ENCODE measurements at regions of chr2 and their contacts with region 1.

Region 1: DNA sequence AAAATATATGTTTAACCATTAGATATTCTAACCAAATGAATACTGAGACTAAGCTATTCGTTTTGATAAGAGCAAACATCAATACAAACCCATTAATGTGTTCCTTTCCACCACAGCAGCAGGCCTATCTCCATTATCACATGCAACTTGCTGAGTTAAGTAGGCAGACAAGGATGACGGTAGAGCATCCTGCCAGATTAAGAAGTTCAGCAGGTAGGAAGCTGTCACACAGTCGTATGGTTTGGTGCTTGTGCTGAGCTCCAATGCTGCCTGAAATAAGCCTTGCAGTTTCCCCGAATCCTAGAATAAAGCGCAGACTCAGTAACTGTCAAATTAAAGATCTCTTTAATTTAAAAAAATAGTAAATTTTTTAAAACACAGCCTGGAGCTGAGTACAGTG is 39.6 kb downstream of the THADA start:
- DNase-seq: no peak
- ATAC-seq: no peak
- H3K4me3 ChIP-seq: no peak overlapping the region
- H3K27ac ChIP-seq: no peak overlapping the region
- H3K4me1 ChIP-seq: no peaks in the 10 kb centered on the region
- CTCF ChIP-seq: no peak
- EP300 ChIP-seq: no peak
- POLR2A ChIP-seq: no peak
- RAD21 ChIP-seq: no peak

Region 2: DNA sequence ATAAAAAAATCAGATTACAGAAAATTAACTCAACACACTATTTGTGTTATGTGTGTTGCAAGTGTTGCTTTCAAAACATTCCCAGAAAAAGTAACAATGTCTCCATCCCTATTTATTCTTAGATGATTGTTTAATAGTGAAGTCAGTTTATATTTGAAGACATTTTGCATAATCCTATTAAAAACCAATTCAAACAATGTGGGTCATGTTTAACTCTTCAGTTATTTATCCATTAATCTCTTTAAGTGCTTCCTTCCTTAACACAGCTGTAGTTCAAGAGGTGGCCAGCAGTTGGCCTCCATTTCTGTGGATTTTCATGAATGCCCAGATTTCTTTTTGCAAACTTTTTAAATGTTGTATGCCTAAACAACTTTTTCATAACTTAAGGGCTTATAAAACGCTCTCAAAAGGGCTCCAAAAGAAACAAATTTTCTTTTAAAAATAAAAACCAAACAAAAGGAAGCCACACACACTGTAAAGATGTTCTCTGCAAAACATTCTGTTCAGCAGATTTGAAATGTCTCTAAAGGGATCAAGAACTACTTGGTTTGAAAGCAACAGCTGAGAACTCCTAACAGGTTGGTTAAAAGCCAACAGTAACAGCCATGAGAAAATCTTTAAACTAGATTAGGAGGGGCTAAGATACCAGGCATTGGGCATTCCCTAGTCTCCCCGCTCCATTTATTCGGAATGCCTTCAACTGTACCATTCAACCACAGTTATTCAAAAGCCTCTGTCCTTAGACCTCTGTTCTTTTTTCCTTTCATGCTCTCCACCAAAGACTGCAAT is 31.9 kb before region 1 on chr2:
- CTCF ChIA-PET with region 1: no interaction called
- POLR2A ChIA-PET with region 1: no interaction called
- DNase-seq: peak; percentile 11 to 23
- ATAC-seq: peak in 1 of 2 experiments; percentile 53; a peak in 1 of 6 replicates
- H3K4me3 ChIP-seq: no peak overlapping the region
- H3K27ac ChIP-seq: no peak overlapping the region
- H3K4me1 ChIP-seq: peaks cover 11% of the 10 kb centered on the region
- CTCF ChIP-seq: 0 out of 3 replicates have a peak, but pooled peaks have one; percentile 10
- EP300 ChIP-seq: no peak
- POLR2A ChIP-seq: no peak
- RAD21 ChIP-seq: no peak

Region 3: DNA sequence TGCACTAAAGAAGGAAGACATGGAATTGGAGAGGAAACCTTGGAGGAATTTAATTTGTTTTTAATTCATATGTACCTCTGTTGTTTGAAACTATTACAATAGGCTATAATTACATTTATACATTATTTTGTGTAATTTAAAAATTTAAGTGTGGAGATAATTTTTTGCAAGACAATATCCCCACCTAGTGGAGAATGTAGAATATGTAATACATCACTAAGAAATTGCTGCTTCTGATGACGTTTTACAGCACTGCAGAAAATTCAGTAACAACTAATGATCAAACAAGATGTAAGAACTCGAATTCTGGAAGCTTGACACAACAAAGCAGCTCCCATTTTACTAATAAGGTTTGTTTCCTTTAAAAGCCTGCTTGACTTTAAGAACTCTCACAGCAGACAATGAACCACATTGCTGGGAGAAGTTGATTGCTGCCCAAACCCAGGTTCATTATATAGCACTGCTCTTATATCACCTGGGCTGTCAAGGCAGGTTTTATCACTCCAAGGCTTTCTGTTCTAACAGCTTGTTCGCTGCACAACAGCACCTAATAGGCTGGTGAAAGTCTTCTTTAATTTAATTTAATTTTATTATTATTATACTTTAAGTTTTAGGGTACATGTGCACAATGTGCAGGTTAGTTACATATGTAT is 13.8 kb before region 1 on chr2:
- CTCF ChIA-PET with region 1: interaction called, 20 read pairs
- POLR2A ChIA-PET with region 1: no interaction called
- DNase-seq: peak; percentile 28 to 55
- ATAC-seq: peak; percentile 56 to 71; a peak in 3 of 6 replicates
- H3K4me3 ChIP-seq: no peak overlapping the region
- H3K27ac ChIP-seq: peak overlapping the region in 1 of 2 experiments; percentile 63; a peak in 1 of 6 replicates
- H3K4me1 ChIP-seq: peaks cover 29% of the 10 kb centered on the region
- CTCF ChIP-seq: peak; percentile 81
- EP300 ChIP-seq: no peak
- POLR2A ChIP-seq: no peak
- RAD21 ChIP-seq: peak; percentile 77 to 86

Region 4: DNA sequence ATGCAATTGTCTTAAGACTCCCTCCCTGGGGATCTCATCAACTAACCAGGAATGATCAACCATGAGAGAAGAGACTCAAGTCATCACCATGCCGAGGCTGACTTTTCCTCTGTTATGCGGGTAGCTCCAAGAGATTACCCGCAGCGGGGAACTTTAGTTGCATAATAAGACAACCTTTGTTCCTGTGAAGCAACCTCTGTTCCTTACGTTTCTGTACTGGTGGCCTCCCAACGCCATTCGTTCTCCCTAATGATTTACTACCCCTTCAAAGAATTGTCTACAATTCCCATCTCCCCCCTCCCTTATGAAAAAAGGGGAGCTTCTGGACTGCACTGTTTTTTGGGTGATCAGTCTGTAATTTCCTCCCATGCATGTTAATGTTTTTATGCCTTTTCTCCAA is 505.6 kb after region 1 on chr2:
- CTCF ChIA-PET with region 1: no interaction called
- POLR2A ChIA-PET with region 1: no interaction called
- DNase-seq: peak in 1 of 2 experiments; percentile 26
- ATAC-seq: peak; percentile 69 to 73; a peak in 4 of 6 replicates
- H3K4me3 ChIP-seq: no peak overlapping the region
- H3K27ac ChIP-seq: peak overlapping the region; percentile 23 to 57; a peak in 1 of 6 replicates
- H3K4me1 ChIP-seq: peaks cover 24% of the 10 kb centered on the region
- CTCF ChIP-seq: no peak
- EP300 ChIP-seq: no peak
- POLR2A ChIP-seq: no peak
- RAD21 ChIP-seq: no peak